ENCODE measurements at regions of chr5 and their contacts with region 1.

Region 1: DNA sequence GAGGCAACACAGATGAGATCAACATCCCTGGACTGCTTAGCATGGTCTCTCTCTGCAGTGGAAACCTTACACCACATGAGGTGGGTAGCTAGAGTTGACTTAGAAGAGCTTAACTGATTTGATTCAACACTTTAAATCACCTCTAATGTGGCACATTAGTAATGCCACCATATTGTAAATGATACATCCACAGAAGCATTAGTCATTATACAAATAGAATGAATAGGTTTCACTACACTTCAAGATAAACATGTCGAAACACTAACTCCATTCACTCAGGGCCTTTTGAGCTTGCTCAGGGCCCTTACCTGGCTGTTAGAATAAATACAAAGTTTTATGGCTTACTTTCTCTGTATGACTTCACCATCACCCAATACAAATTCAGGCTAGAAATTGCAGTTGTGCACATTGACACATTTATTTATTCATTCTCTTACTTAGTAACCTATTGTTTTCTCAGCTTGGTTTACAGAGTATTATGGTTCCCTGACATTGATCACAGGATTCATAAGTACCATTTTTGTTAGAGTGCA is 9.3 kb upstream of the SMAD5 start:
- DNase-seq: peak; percentile 70
- H3K4me3 Mint-ChIP-seq: peak overlapping the region; percentile 56
- H3K27ac Mint-ChIP-seq: peak overlapping the region; percentile 97
- H3K4me1 Mint-ChIP-seq: peaks cover 48% of the 10 kb centered on the region
- H3K27me3 Mint-ChIP-seq: no peaks in the 10 kb centered on the region
- CTCF ChIP-seq: no peak

Region 2: DNA sequence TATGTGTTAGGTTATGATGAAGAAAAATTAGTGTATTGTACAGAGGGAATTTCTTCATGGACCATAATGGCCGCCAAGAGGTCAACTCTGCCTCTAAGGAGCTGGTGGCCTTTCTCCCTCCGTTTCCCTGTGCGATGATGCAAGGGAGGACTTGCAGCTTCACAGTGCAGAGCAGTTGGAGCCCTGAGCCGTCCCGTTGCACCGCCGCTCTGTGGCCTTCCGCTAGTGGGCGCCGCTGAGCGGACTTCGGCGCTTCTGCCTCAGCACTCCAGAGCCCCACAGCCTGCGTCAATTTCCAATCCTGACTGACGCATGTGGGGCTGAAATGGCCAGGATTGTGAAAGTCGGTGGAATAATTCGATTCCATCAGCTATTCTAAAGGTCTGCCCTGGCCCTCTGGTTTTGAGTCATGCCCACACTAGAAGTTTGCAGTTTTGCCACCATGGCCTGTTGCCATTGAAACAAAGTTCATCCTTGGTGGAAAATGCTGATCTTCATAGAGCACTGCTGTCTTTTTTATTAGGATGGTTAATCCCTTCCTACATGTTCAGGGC is 145.8 kb before region 1 on chr5:
- CTCF ChIA-PET with region 1: no interaction called
- intact Hi-C with region 1: no loop called
- DNase-seq: peak; percentile 79
- H3K4me3 Mint-ChIP-seq: no peak overlapping the region
- H3K27ac Mint-ChIP-seq: no peak overlapping the region
- H3K4me1 Mint-ChIP-seq: no peaks in the 10 kb centered on the region
- H3K27me3 Mint-ChIP-seq: no peaks in the 10 kb centered on the region
- CTCF ChIP-seq: peak; percentile 66

Region 3: DNA sequence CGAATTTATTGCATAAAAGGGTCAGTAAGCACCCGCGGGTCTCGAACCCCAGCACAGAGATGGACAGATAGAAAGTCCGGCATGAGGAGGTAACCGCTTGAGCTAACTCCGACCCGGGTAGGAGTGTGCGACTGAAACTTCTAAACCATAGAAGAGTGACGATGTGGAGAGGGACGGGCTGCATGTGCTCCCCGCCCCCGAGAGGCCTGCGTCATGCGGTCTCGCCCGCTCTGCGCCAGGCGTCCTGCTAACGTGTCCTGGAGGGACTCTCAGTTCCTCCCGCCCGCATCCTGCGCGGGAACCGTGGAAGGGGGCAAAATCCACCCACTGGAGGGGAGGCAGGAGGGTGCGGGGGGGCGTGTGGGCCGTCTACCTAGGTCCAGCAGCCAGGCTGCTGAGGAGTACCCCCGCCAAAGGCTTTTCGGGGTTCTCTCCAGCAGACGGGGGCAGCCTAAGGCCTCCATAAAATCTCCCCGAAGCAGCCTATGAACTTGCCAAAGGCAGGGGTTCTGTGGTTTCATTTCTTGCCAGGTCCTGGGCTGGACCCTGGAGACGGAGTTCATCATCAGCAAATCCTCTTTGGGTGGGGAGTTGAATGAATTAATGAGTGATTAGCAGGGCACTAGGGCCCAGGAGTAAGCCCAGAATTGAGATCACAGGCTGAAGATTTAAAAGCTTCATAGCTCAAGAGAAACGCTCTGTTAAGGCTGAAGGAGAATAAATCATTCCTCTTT is 42.7 kb before region 1 on chr5:
- CTCF ChIA-PET with region 1: interaction called, 15 read pairs
- intact Hi-C with region 1: loop called (anchors 5 kb)
- DNase-seq: peak; percentile 95
- H3K4me3 Mint-ChIP-seq: peak overlapping the region; percentile 71
- H3K27ac Mint-ChIP-seq: peak overlapping the region; percentile 99
- H3K4me1 Mint-ChIP-seq: no peaks in the 10 kb centered on the region
- H3K27me3 Mint-ChIP-seq: no peaks in the 10 kb centered on the region
- CTCF ChIP-seq: no peak

Region 4: DNA sequence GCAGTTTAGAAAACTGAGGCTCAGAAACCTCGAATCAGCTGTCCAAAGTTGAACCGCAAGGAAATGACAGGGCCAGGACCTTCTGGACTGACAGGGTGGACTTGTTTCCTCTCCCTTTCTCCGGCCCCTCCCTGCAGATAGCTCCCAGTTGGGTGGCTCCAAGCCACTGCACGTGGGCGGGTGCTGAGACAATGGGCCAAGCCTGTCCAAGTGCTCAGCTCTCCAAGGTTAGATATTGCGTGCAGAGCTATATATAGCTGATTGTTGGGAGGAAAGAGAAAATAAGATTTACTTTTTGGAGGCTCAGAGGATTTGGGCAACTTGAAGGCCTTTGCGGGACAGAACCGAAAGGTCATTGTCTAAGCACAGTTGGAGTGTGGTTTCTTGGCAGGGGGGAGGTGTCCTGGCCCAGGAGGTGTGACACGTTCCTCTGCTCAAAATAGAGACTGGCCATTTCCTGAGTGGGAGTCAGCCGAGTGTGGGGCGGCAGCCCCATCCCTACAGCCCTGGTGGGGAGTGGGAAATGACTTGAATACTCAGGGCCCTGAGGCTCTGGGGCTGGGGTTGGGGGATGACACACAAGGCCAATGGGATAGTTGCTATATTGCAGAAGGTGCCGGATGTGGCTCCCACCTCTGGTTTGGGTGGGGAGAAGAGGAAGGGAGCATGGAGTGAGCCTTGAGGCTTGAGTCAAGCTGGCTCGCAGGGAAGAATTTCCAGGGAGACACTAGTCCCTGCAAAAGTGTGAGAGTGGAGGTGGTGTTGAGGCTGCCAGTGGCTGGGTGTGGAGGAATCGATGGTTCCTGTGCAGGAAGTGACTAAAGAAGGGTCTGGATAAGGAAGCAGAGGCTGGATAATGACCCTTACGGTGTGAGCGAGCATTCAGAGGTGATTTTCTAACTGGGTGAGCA is 35.1 kb before region 1 on chr5:
- CTCF ChIA-PET with region 1: interaction called, 15 read pairs
- intact Hi-C with region 1: loop called (anchors 5 kb)
- DNase-seq: peak; percentile 73
- H3K4me3 Mint-ChIP-seq: peak overlapping the region; percentile 25
- H3K27ac Mint-ChIP-seq: peak overlapping the region; percentile 85
- H3K4me1 Mint-ChIP-seq: peaks cover 35% of the 10 kb centered on the region
- H3K27me3 Mint-ChIP-seq: no peaks in the 10 kb centered on the region
- CTCF ChIP-seq: no peak

Region 5: GRCh38 chr5:136094189-136094912 is 29.0 kb before region 1 on chr5:
- CTCF ChIA-PET with region 1: interaction called, 5 read pairs
- intact Hi-C with region 1: loop called (anchors 2 kb)
- DNase-seq: peak; percentile 54
- H3K4me3 Mint-ChIP-seq: peak overlapping the region; percentile 33
- H3K27ac Mint-ChIP-seq: peak overlapping the region; percentile 90
- H3K4me1 Mint-ChIP-seq: peaks cover 62% of the 10 kb centered on the region
- H3K27me3 Mint-ChIP-seq: no peaks in the 10 kb centered on the region
- CTCF ChIP-seq: no peak

Region 6: DNA sequence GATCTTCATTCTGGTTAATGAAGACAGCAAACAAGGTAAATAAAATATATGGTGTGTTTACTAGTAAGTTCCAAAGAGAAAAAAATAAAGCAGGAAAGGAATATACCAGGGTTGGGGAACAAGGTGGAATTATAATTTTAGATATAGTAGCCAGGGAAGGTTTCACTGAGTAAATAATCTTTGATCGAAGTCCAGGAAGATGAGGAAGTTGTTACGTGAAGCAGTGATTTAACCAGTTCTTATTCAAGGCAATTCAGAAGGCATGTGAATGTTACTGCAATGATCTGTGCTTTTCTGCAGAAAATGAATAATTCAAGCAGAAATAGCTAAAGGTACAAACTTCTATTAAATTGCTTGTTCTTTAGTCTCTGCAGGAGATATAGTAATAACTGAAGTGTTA is 63.5 kb after region 1 on chr5:
- CTCF ChIA-PET with region 1: no interaction called
- intact Hi-C with region 1: no loop called
- DNase-seq: no peak
- H3K4me3 Mint-ChIP-seq: peak overlapping the region; percentile 1
- H3K27ac Mint-ChIP-seq: peak overlapping the region; percentile 19
- H3K4me1 Mint-ChIP-seq: peaks cover 37% of the 10 kb centered on the region
- H3K27me3 Mint-ChIP-seq: peaks cover 9% of the 10 kb centered on the region
- CTCF ChIP-seq: no peak